ENCODE measurements at regions of chr14 and their contacts with region 1.

Region 1: DNA sequence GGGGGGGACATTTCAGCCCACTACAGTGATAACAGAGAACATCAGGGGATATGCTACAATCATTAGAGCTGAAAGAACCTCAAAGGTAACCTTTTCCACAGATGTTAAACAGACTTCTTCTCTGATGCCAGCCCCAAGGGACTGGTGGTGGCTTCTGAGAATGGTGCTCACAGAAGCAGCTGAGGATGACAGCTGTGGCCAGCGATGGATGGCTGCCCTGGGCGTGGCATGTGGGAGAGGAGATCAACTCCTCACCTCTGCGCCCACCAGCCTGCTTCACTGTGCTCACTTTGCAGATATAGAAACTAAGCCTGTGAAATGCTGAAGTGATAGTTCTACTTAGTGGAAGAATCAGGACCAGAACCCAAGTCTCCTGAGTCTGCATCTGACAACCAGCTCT is 33.0 kb downstream of the FOXN3 start:
- DNase-seq: peak; percentile 95
- ATAC-seq: peak; percentile 96
- H3K4me3 ChIP-seq: peak overlapping the region in 1 of 5 experiments; percentile 35
- H3K4me3 Mint-ChIP-seq: peak overlapping the region; percentile 46
- H3K27ac ChIP-seq: peak overlapping the region; percentile 69 to 72
- H3K27ac Mint-ChIP-seq: peak overlapping the region; percentile 86
- H3K4me1 ChIP-seq: peaks cover 58 to 65% of the 10 kb centered on the region in 2 donors
- H3K4me1 Mint-ChIP-seq: peaks cover 70% of the 10 kb centered on the region
- H3K27me3 ChIP-seq: no peaks in the 10 kb centered on the region
- H3K27me3 Mint-ChIP-seq: no peaks in the 10 kb centered on the region
- CTCF ChIP-seq: no peak

Region 2: GRCh38 chr14:89178802-89179535 is 205.1 kb before region 1 on chr14:
- CTCF ChIA-PET with region 1: interaction called, 10 read pairs
- POLR2A ChIA-PET with region 1: no interaction called
- intact Hi-C with region 1: loop called (anchors 5 kb)
- DNase-seq: no peak
- ATAC-seq: no peak
- H3K4me3 ChIP-seq: no peak overlapping the region
- H3K4me3 Mint-ChIP-seq: no peak overlapping the region
- H3K27ac ChIP-seq: peak overlapping the region in 1 of 2 donors; percentile 39
- H3K27ac Mint-ChIP-seq: peak overlapping the region; percentile 33
- H3K4me1 ChIP-seq: peaks cover 7 to 11% of the 10 kb centered on the region in 2 donors
- H3K4me1 Mint-ChIP-seq: peaks cover 19% of the 10 kb centered on the region
- H3K27me3 ChIP-seq: no peaks in the 10 kb centered on the region
- H3K27me3 Mint-ChIP-seq: no peaks in the 10 kb centered on the region
- CTCF ChIP-seq: no peak

Region 3: DNA sequence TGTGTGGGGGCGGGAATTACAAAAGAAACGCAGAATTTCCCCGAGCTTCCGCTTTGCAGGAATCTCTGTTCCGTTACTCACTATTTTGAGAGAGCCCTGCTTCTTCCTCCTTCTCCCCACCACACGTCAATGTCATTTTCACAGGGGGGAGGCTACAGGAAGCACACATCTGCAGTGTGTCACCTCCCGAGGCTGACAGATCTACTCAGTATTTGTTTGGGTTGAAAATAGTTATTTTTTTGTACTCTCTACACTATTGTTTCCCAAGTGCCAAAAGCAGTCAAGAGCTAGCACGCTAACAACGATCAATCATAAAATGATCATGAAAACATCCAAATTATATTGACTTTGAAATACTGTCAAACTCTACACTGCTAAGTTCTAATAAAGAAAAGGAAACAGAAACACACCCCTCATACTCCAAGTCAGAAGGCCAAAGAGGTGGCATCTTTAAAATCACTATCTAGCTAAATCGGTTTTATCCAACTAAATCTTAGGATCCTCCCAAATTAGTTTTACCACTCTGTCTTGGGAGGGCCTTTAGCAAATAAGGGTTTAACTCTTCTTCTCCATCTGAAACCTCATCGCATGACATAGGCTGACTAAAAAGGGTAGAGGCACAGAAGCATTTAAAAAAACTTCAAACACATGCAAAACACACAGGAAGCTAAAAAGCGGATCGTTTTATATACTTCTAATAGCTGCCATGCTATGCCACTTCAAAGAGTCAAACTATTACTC is 18.8 kb before region 1 on chr14:
- CTCF ChIA-PET with region 1: interaction called, 4 read pairs
- POLR2A ChIA-PET with region 1: interaction called, 16 read pairs
- intact Hi-C with region 1: loop called (anchors 1 kb)
- DNase-seq: peak; percentile 87
- ATAC-seq: peak; percentile 93
- H3K4me3 ChIP-seq: peak overlapping the region; percentile 29 to 60 (median 51)
- H3K4me3 Mint-ChIP-seq: peak overlapping the region; percentile 84
- H3K27ac ChIP-seq: peak overlapping the region; percentile 86 to 92
- H3K27ac Mint-ChIP-seq: peak overlapping the region; percentile 90
- H3K4me1 ChIP-seq: peaks cover 43 to 52% of the 10 kb centered on the region in 2 donors
- H3K4me1 Mint-ChIP-seq: peaks cover 57% of the 10 kb centered on the region
- H3K27me3 ChIP-seq: no peaks in the 10 kb centered on the region
- H3K27me3 Mint-ChIP-seq: no peaks in the 10 kb centered on the region
- CTCF ChIP-seq: no peak

Region 4: GRCh38 chr14:89399594-89400068 is 15.6 kb after region 1 on chr14:
- CTCF ChIA-PET with region 1: interaction called, 3 read pairs
- POLR2A ChIA-PET with region 1: interaction called, 3 read pairs
- intact Hi-C with region 1: loop called (anchors 2 kb)
- DNase-seq: no peak
- ATAC-seq: no peak
- H3K4me3 ChIP-seq: no peak overlapping the region
- H3K4me3 Mint-ChIP-seq: no peak overlapping the region
- H3K27ac ChIP-seq: no peak overlapping the region
- H3K27ac Mint-ChIP-seq: no peak overlapping the region
- H3K4me1 ChIP-seq: peaks cover 15 to 17% of the 10 kb centered on the region in 2 donors
- H3K4me1 Mint-ChIP-seq: peaks cover 78% of the 10 kb centered on the region
- H3K27me3 ChIP-seq: no peaks in the 10 kb centered on the region
- H3K27me3 Mint-ChIP-seq: no peaks in the 10 kb centered on the region
- CTCF ChIP-seq: no peak

Region 5: DNA sequence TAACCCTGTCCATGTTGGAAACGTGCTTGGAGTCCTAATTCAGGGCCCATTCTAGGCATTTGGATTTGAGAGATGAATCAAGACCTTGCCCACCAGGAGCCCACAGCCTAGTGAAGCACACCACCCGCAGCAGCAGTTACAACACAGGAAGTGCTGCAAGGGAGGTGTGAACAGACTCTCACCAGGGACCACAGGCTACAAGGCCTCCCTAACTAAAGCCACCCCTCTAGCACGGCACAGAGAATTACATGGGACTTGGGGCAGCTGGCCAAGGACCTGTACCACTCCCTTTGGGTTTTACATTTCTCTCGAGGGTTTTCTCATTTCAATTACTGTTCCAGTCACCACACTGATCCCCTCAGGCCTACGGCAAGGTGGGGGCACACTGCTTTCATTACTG is 82.5 kb after region 1 on chr14:
- CTCF ChIA-PET with region 1: no interaction called
- POLR2A ChIA-PET with region 1: no interaction called
- intact Hi-C with region 1: no loop called
- DNase-seq: peak; percentile 32
- ATAC-seq: peak; percentile 44
- H3K4me3 ChIP-seq: no peak overlapping the region
- H3K4me3 Mint-ChIP-seq: peak overlapping the region; percentile 26
- H3K27ac ChIP-seq: peak overlapping the region; percentile 14 to 54
- H3K27ac Mint-ChIP-seq: peak overlapping the region; percentile 65
- H3K4me1 ChIP-seq: peaks cover 22 to 34% of the 10 kb centered on the region in 2 donors
- H3K4me1 Mint-ChIP-seq: peaks cover 53% of the 10 kb centered on the region
- H3K27me3 ChIP-seq: no peaks in the 10 kb centered on the region
- H3K27me3 Mint-ChIP-seq: no peaks in the 10 kb centered on the region
- CTCF ChIP-seq: no peak

Region 6: GRCh38 chr14:89720741-89721315 is 336.8 kb after region 1 on chr14:
- CTCF ChIA-PET with region 1: no interaction called
- POLR2A ChIA-PET with region 1: no interaction called
- intact Hi-C with region 1: loop called (anchors 1 kb)
- DNase-seq: peak; percentile 91
- ATAC-seq: peak; percentile 93
- H3K4me3 ChIP-seq: peak overlapping the region in 2 of 5 experiments; percentile 26 to 40
- H3K4me3 Mint-ChIP-seq: peak overlapping the region; percentile 75
- H3K27ac ChIP-seq: peak overlapping the region; percentile 93 to 95
- H3K27ac Mint-ChIP-seq: peak overlapping the region; percentile 95
- H3K4me1 ChIP-seq: peaks cover 59 to 62% of the 10 kb centered on the region in 2 donors
- H3K4me1 Mint-ChIP-seq: peaks cover 62% of the 10 kb centered on the region
- H3K27me3 ChIP-seq: no peaks in the 10 kb centered on the region
- H3K27me3 Mint-ChIP-seq: no peaks in the 10 kb centered on the region
- CTCF ChIP-seq: no peak

Measured in B cell (primary cell).